ENCODE measurements at regions of chr5 and their contacts with region 1.

Region 1: GRCh38 chr5:59371525-59372127 is 521.9 kb downstream of the PDE4D start:
- DNase-seq: no peak
- ATAC-seq: no peak
- H3K4me3 ChIP-seq: no peak overlapping the region
- H3K27ac ChIP-seq: no peak overlapping the region
- H3K4me1 ChIP-seq: no peaks in the 10 kb centered on the region
- H3K27me3 ChIP-seq: no peaks in the 10 kb centered on the region
- CTCF ChIP-seq: no peak

Region 2: GRCh38 chr5:59188419-59189225 is 183.0 kb before region 1 on chr5:
- intact Hi-C with region 1: loop called (anchors 5 to 10 kb)
- DNase-seq: peak; percentile 41 to 82 (median 66)
- ATAC-seq: peak; percentile 91 to 99 (median 93)
- H3K4me3 ChIP-seq: peak overlapping the region in 1 of 4 donors; percentile 21
- H3K27ac ChIP-seq: no peak overlapping the region
- H3K4me1 ChIP-seq: no peaks in the 10 kb centered on the region
- H3K27me3 ChIP-seq: no peaks in the 10 kb centered on the region
- CTCF ChIP-seq: peak; percentile 60 to 74 (median 68)

Region 3: DNA sequence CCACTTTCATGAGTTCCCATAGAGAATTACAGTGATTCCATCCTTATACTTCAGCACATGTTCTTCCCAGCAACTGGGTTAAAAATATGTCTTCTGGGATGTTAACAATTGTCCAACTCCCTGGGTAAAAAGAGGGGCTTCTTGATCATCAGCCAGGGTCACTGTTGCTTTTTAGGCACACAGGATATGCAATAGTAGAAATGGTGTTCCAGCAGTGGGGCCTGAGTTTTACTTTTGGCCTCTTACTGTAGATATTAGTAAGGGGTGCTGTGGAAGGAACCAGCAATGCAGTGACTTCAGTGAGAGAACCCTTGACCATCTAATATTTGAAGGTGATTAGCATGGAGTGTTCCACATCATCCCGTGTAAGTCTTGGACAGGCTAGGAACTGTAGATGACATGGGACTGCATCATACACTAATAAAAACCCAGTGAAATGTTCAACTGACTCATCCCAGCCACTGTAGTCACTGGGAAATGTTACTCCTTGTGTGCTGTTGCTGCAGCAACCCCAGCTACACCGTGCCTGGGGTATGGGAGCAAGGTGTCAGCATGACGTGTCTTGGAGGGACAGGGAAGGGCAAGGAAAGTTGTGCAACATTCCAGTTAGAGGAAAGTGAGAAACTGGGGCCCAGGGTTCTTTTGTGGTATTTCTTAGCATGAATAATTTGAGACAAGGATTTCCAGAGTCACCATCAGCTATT is 177.9 kb before region 1 on chr5:
- intact Hi-C with region 1: loop called (anchors 5 to 10 kb)
- DNase-seq: no peak
- ATAC-seq: peak in 1 of 4 donors; percentile 41
- H3K4me3 ChIP-seq: no peak overlapping the region
- H3K27ac ChIP-seq: no peak overlapping the region
- H3K4me1 ChIP-seq: no peaks in the 10 kb centered on the region
- H3K27me3 ChIP-seq: no peaks in the 10 kb centered on the region
- CTCF ChIP-seq: no peak

Region 4: DNA sequence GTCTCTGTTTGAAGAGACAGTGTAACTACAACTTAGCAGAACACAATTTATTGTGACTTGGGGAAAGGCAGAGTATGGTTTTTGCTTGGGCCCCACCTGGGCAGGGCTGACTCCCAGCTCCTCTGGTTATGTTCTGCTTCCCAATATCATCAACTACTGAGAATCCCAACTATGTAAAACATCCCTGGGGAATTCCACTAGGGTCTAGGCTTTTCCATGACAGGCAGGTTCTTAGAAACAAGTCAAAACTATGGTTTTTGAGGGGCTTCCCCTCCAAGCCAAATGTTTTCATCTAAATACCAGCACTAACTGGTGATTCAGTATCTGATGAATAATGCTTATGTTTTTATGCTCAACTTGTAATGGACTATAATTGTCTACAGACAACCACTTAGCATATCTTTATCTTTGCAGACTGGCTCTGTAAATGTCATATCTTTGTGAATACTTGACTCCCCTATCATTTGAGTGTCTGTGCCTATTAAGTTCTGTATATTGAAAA is 112.4 kb after region 1 on chr5:
- intact Hi-C with region 1: no loop called
- DNase-seq: no peak
- ATAC-seq: peak in 1 of 4 donors; percentile 38
- H3K4me3 ChIP-seq: no peak overlapping the region
- H3K27ac ChIP-seq: no peak overlapping the region
- H3K4me1 ChIP-seq: peaks cover 4 to 33% (median 29%) of the 10 kb centered on the region in 3 donors
- H3K27me3 ChIP-seq: no peaks in the 10 kb centered on the region
- CTCF ChIP-seq: no peak

Region 5: DNA sequence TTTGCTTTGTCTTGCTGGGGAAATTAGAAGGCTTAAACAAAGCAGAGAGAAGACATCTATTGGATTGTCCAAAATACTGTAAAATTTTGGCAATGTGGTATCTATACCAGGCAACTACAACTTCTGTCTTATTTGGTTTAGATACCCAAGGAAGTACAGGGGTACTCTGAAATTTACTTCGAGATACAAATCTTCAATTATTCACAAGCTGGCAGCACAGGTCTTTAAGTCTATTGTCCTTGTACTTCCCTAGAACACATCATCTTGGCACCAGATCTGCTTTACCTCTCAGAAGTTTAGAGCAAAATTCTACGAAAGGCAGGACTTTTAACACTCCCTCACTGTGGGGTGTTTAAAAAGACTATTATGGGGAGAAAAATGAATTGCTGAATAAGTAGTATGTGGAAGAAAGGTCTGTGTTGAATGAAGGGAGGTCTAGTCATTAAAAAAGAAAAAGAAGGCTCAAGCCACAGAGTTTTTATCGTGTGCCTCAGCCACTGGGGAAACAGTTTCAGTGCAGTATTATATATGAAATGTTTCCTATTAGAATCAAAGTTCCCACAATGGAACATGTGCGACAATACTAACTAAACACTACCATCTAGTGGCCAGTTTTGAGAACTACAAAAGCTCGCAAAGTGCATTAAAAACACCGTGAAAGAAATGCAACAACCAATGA is 428.2 kb after region 1 on chr5:
- intact Hi-C with region 1: loop called in 1 of 3 experiments (anchors 10 kb)
- DNase-seq: peak in 1 of 6 donors; percentile 37
- ATAC-seq: peak; percentile 71 to 96 (median 90)
- H3K4me3 ChIP-seq: no peak overlapping the region
- H3K27ac ChIP-seq: peak overlapping the region in 2 of 4 donors; percentile 10 to 56
- H3K4me1 ChIP-seq: peaks cover 0 to 12% (median 0%) of the 10 kb centered on the region in 3 donors
- H3K27me3 ChIP-seq: no peaks in the 10 kb centered on the region
- CTCF ChIP-seq: peak; percentile 60 to 78 (median 71)